ENCODE measurements at regions of chr7 and their contacts with region 1.

Region 1: GRCh38 chr7:1137510-1138167 is 22.4 kb downstream of the ZFAND2A start:
- DNase-seq: no peak
- H3K4me3 ChIP-seq: peak overlapping the region; percentile 72 to 97 (median 80)
- H3K27ac ChIP-seq: peak overlapping the region; percentile 33
- H3K4me1 ChIP-seq: peaks cover 10% of the 10 kb centered on the region
- H3K27me3 ChIP-seq: no peaks in the 10 kb centered on the region
- CTCF ChIP-seq: no peak
- POLR2A ChIP-seq: peak; percentile 64

Region 2: GRCh38 chr7:842431-843031 is 295.1 kb before region 1 on chr7:
- CTCF ChIA-PET with region 1: no interaction called
- POLR2A ChIA-PET with region 1: no interaction called
- dilution Hi-C with region 1: no loop called
- intact Hi-C with region 1: no loop called
- DNase-seq: no peak
- H3K4me3 ChIP-seq: no peak overlapping the region
- H3K27ac ChIP-seq: no peak overlapping the region
- H3K4me1 ChIP-seq: no peaks in the 10 kb centered on the region
- H3K27me3 ChIP-seq: no peaks in the 10 kb centered on the region
- CTCF ChIP-seq: no peak
- POLR2A ChIP-seq: no peak

Region 3: GRCh38 chr7:1159891-1160668 is 22.4 kb after region 1 on chr7 and contains the start of gene ZFAND2A:
- CTCF ChIA-PET with region 1: interaction called, 4 read pairs
- POLR2A ChIA-PET with region 1: interaction called, 3 read pairs
- dilution Hi-C with region 1: no loop called
- intact Hi-C with region 1: loop called (anchors 1 kb)
- DNase-seq: peak; percentile 99
- H3K4me3 ChIP-seq: peak within 1 kb of the TSS; percentile 71 to 97 (median 77)
- H3K27ac ChIP-seq: peak within 1 kb of the TSS; percentile 79
- H3K4me1 ChIP-seq: peaks cover 30% of the 10 kb centered on the region
- H3K27me3 ChIP-seq: no peaks in the 10 kb centered on the region
- CTCF ChIP-seq: no peak
- POLR2A ChIP-seq: peak; percentile 90
- total RNA-seq, gene ZFAND2A: 20.6 and 31.8 TPM in 2 replicates